Cardiac septum (tissue), 1 donor: ENCODE measurements at regions of chr6 and their contacts with region 1.

Region 1: DNA sequence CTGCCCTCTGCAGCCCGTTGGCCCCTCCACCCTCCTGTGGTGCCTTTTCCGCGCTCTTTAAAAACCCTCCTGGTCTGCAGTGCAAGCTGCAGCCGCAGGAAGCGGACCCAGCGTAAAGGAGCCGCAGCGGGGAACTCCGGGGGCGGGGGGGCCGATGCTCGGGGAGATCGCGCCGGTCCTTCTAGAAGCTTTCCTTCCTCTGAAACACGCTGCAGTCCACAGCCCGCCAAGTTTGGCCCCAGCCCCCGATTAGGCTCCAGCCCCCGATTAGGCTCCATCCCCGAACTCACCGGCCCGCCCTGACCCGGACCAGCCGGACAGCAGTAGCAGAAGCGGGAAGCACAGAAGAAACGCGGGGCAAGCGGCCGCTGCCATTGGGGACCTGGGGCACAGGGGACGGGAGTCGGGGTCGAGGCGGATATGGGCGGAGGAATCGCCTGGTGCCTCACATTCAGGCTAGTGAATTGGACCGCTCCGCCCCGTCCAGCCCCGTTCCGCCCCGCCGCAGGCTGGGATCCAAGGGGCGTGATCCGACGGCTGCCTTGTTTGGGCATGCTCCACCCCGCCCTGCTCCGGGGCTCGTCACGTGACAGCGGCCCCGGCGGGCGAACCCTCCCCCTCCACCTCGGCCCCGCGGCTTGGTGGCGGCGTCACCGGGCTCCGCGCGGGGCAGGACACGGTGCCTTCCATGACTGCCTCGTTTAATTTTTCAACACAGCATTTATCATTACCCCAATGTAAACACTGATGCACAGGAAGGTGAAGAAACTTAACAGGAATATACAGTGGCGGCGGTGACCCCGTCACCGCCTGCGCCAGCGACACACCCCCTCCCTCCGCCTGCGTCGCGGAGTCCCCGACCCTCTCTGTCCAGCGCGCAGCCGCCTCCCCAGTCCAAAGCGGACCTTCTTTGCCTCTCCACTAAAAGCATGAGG is 20.3 kb downstream of the RAET1L start:
- DNase-seq: peak; percentile 96

Region 2: DNA sequence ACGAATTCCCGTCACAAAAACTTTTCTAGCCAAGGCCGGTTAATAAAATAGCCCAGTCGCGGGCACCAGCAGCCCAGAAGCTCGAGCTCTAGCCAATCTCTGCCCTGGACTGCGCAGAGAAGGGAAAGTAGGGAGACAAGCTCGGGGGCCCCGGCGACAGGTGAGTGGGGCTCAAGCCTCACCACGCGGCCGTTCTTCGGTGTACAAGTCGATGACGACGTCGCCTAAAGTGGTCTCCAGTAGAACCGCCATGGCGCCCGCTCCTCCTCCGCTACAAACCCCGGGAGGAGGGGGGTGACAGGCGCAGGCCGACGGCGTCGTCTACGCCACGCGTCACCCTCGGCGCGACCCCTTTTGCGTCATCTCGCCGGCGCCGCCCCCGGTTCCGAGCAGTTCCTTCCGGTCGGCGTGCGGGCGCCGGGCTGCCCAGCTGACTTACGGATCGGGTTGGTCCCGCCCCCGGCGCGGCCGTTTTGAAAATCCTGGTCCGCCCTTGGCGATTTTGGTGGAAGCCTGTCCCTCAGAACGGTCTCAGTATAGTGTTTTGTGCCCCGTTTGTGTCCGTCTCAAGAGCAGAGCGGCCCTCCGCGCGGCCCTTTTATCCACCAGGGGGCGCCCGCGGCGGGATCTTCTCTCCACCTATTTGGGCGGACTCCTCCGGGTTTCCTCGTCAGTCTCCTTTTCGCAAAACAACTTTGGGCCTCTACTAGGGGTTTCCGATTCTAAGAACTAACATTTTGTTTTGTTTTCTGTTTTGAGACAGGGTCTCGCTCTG is 459.1 kb before region 1 on chr6 and contains the start of gene PPIL4:
- intact Hi-C with region 1: loop called (anchors 10 kb)
- DNase-seq: peak; percentile 97
- total RNA-seq, gene PPIL4: 18.6 TPM

Region 3: DNA sequence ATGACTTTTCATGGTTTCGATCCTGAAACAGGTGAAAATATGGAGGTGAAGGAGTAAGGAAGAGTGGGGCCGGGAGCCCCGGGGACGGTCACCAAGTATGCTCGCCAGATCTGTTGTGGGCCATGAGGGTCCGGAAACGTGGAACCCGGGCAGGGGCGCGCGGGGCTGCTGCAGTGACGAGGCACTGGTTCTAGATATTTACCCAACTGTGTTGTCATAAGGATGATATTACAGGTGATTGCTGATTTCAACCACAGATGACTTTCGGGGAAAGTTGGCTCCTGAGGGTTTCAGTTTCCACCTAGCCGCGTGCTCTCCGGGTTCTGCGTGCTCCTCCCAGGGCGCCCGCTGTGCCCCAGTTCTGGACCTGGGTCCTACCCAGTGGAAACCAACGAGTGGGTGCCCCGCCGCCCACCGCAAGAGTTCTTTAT is 94.3 kb before region 1 on chr6:
- intact Hi-C with region 1: no loop called
- DNase-seq: peak; percentile 46

Region 4: GRCh38 chr6:149941583-149942431 is 63.2 kb before region 1 on chr6 and contains the start of gene ULBP2:
- intact Hi-C with region 1: loop called (anchors 2 kb)
- DNase-seq: peak; percentile 93
- total RNA-seq, gene ULBP2: 1.1 TPM

Region 5: DNA sequence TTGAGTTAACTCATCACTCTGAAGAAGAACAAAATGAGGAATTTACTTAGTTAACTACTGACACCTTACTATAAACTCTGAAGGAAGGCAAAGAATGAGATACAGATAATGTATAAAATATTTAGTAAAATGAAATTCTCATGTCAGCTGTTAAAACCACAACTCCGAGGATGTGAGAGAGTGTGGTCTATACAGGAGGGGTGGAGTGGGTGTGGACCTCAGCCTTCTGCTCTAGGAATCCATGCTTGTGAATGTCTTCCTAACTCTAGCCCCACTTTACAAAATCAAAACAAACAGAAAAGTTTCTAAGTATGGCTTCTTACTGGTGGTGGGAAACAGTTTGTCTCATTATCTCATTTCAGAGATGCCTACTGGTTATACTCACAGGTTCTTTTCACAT is 152.0 kb after region 1 on chr6:
- intact Hi-C with region 1: no loop called
- DNase-seq: no peak